Naive thymus-derived CD4-positive, alpha-beta T cell (primary cell): ENCODE measurements at regions of chr2 and their contacts with region 1.

Region 1: GRCh38 chr2:197425550-197425949 is 9.3 kb downstream of the SF3B1 start:
- DNase-seq: no peak
- ATAC-seq: peak; percentile 18
- H3K4me3 ChIP-seq: no peak overlapping the region
- H3K4me3 Mint-ChIP-seq: peak overlapping the region; percentile 3 to 99 (median 66)
- H3K27ac ChIP-seq: peak overlapping the region; percentile 44
- H3K27ac Mint-ChIP-seq: peak overlapping the region in 8 of 9 donors; percentile 30 to 88 (median 59)
- H3K4me1 ChIP-seq: peaks cover 34 to 48% of the 10 kb centered on the region in 2 donors
- H3K4me1 Mint-ChIP-seq: peaks cover 53 to 85% (median 74%) of the 10 kb centered on the region in 7 donors
- H3K27me3 ChIP-seq: no peaks in the 10 kb centered on the region
- H3K27me3 Mint-ChIP-seq: no peaks in the 10 kb centered on the region

Region 2: DNA sequence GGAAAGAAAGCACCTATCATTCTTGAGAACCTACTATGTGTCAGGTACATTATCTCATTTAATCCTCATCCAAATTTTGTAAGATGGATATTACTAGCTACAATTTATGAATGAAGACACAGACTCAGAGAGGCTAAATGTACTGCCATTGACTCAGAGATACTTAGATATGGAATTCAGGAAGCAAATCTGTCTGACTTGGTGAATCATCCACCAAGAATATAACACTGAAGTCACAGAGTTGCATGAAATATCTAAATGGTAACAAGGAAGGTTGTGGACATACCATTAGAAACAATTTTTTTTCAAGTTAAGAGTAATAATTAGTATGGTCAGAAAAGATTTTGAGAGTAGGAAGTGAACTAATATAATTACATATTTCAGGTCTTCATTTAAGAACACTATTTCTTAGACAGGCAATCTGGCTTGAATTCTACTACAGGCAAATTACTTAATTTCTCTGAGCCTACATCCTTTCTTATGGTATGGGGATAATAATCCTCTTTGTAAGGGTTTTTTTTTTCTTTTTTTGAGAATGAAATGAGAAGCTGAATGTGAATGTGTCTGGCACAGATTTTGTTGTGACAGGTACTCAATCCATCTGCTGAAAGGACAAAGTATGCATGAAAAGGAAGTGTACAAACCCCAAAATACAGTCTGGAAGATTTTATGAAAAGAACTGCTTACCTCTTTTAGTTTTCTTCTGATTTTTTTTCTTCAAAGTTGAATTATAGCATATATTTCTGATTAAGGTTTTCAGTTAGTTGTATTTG is 601.6 kb before region 1 on chr2:
- CTCF ChIA-PET with region 1: no interaction called
- POLR2A ChIA-PET with region 1: no interaction called
- intact Hi-C with region 1: no loop called
- DNase-seq: no peak
- ATAC-seq: no peak
- H3K4me3 ChIP-seq: no peak overlapping the region
- H3K4me3 Mint-ChIP-seq: no peak overlapping the region
- H3K27ac ChIP-seq: no peak overlapping the region
- H3K27ac Mint-ChIP-seq: no peak overlapping the region
- H3K4me1 ChIP-seq: no peaks in the 10 kb centered on the region
- H3K4me1 Mint-ChIP-seq: peaks cover 0 to 18% (median 1%) of the 10 kb centered on the region in 7 donors
- H3K27me3 ChIP-seq: no peaks in the 10 kb centered on the region
- H3K27me3 Mint-ChIP-seq: peaks cover 0 to 29% (median 16%) of the 10 kb centered on the region in 5 donors

Region 3: GRCh38 chr2:197461057-197461456 is 35.5 kb after region 1 on chr2:
- CTCF ChIA-PET with region 1: no interaction called
- POLR2A ChIA-PET with region 1: interaction called, 176 read pairs
- intact Hi-C with region 1: loop called (anchors 5 kb)
- DNase-seq: no peak
- ATAC-seq: no peak
- H3K4me3 ChIP-seq: no peak overlapping the region
- H3K4me3 Mint-ChIP-seq: no peak overlapping the region
- H3K27ac ChIP-seq: no peak overlapping the region
- H3K27ac Mint-ChIP-seq: peak overlapping the region in 1 of 9 donors; percentile 14
- H3K4me1 ChIP-seq: no peaks in the 10 kb centered on the region
- H3K4me1 Mint-ChIP-seq: peaks cover 22 to 45% (median 32%) of the 10 kb centered on the region in 7 donors
- H3K27me3 ChIP-seq: no peaks in the 10 kb centered on the region
- H3K27me3 Mint-ChIP-seq: no peaks in the 10 kb centered on the region

Region 4: GRCh38 chr2:197480165-197481036 is 54.9 kb after region 1 on chr2:
- CTCF ChIA-PET with region 1: no interaction called
- POLR2A ChIA-PET with region 1: no interaction called
- intact Hi-C with region 1: no loop called
- DNase-seq: no peak
- ATAC-seq: peak; percentile 17
- H3K4me3 ChIP-seq: no peak overlapping the region
- H3K4me3 Mint-ChIP-seq: no peak overlapping the region
- H3K27ac ChIP-seq: no peak overlapping the region
- H3K27ac Mint-ChIP-seq: peak overlapping the region in 4 of 9 donors; percentile 14 to 79 (median 43)
- H3K4me1 ChIP-seq: no peaks in the 10 kb centered on the region
- H3K4me1 Mint-ChIP-seq: peaks cover 0 to 18% (median 0%) of the 10 kb centered on the region in 7 donors
- H3K27me3 ChIP-seq: no peaks in the 10 kb centered on the region
- H3K27me3 Mint-ChIP-seq: no peaks in the 10 kb centered on the region

Region 5: DNA sequence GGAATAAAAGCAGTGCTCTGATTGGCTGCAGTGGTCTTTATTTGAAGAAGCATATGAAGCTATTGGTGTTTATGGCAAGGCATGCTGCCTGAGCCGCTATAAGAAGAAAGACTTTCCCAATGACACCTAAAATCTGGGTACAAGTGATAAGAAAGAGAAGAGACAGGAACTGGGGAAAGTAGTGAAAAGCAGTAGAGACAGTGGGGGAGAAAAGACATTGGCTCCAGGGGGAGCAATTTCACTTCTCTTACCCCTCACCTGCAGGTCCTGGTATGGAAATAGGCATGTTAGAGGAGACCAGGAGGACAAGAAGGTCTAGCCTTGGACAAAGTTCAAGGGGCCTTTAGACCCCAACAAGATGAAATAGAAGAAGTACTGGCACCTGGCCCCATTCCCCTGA is 425.9 kb after region 1 on chr2:
- CTCF ChIA-PET with region 1: no interaction called
- POLR2A ChIA-PET with region 1: no interaction called
- intact Hi-C with region 1: no loop called
- DNase-seq: no peak
- ATAC-seq: no peak
- H3K4me3 ChIP-seq: no peak overlapping the region
- H3K4me3 Mint-ChIP-seq: peak overlapping the region in 7 of 10 donors; percentile 3 to 80 (median 29)
- H3K27ac ChIP-seq: no peak overlapping the region
- H3K27ac Mint-ChIP-seq: peak overlapping the region in 8 of 9 donors; percentile 60 to 100 (median 98)
- H3K4me1 ChIP-seq: peaks cover 4 to 76% of the 10 kb centered on the region in 2 donors
- H3K4me1 Mint-ChIP-seq: peaks cover 29 to 100% (median 93%) of the 10 kb centered on the region in 7 donors
- H3K27me3 ChIP-seq: no peaks in the 10 kb centered on the region
- H3K27me3 Mint-ChIP-seq: no peaks in the 10 kb centered on the region